ENCODE measurements at regions of chr2 and their contacts with region 1.

Region 1: GRCh38 chr2:219245148-219245898 is at the starts of genes GLB1L and STK16:
- DNase-seq: peak; percentile 89
- ATAC-seq: peak; percentile 81
- H3K4me3 ChIP-seq: peak within 1 kb of the TSS; percentile 88 to 97 (median 93)
- H3K27ac ChIP-seq: peak within 1 kb of the TSS; percentile 72
- H3K4me1 ChIP-seq: peaks cover 53% of the 10 kb centered on the region
- H3K27me3 ChIP-seq: no peaks in the 10 kb centered on the region; a peak in 1 of 5 replicates
- CTCF ChIP-seq: no peak; the same call in 1 of the 2 replicates
- EP300 ChIP-seq: no peak
- POLR2A ChIP-seq: peak in 1 of 2 experiments; percentile 91; a peak in 2 of 4 replicates
- RAD21 ChIP-seq: peak; percentile 44
- total RNA-seq, gene GLB1L: 2.7 and 6.8 TPM in 2 replicates
- total RNA-seq, gene STK16: 27.0 and 28.0 TPM in 2 replicates

Region 2: GRCh38 chr2:219095406-219095935 is 149.9 kb before region 1 on chr2:
- CTCF ChIA-PET with region 1: no interaction called
- POLR2A ChIA-PET with region 1: no interaction called
- in situ Hi-C with region 1: no loop called
- intact Hi-C with region 1: no loop called
- DNase-seq: no peak
- ATAC-seq: no peak
- H3K4me3 ChIP-seq: no peak overlapping the region
- H3K27ac ChIP-seq: no peak overlapping the region
- H3K4me1 ChIP-seq: peaks cover 12% of the 10 kb centered on the region
- H3K27me3 ChIP-seq: no peaks in the 10 kb centered on the region; a peak in 1 of 5 replicates
- CTCF ChIP-seq: no peak
- EP300 ChIP-seq: no peak
- POLR2A ChIP-seq: no peak
- RAD21 ChIP-seq: no peak

Region 3: GRCh38 chr2:219206442-219207253 is 38.7 kb before region 1 on chr2 and contains the start of gene ZFAND2B:
- CTCF ChIA-PET with region 1: no interaction called
- POLR2A ChIA-PET with region 1: interaction called, 73 read pairs
- in situ Hi-C with region 1: no loop called
- intact Hi-C with region 1: no loop called
- DNase-seq: peak; percentile 86
- ATAC-seq: peak; percentile 83
- H3K4me3 ChIP-seq: peak within 1 kb of the TSS; percentile 65 to 86 (median 74)
- H3K27ac ChIP-seq: peak within 1 kb of the TSS; percentile 95
- H3K4me1 ChIP-seq: peaks cover 54% of the 10 kb centered on the region
- H3K27me3 ChIP-seq: no peaks in the 10 kb centered on the region; a peak in 1 of 5 replicates
- CTCF ChIP-seq: no peak; the same call in 1 of the 2 replicates
- EP300 ChIP-seq: peak in 1 of 2 experiments; percentile 4; a peak in 1 of 4 replicates
- POLR2A ChIP-seq: peak in 1 of 2 experiments; percentile 97; a peak in 2 of 4 replicates
- RAD21 ChIP-seq: no peak; the same call in none of the 2 replicates
- total RNA-seq, gene ZFAND2B: 39.4 and 53.3 TPM in 2 replicates

Region 4: GRCh38 chr2:219229305-219230058 is 15.8 kb before region 1 on chr2 and contains the starts of genes ANKZF1 and ATG9A:
- CTCF ChIA-PET with region 1: no interaction called
- POLR2A ChIA-PET with region 1: interaction called, 69 read pairs
- in situ Hi-C with region 1: no loop called
- intact Hi-C with region 1: loop called (anchors 1 kb)
- DNase-seq: peak; percentile 99
- ATAC-seq: peak; percentile 94
- H3K4me3 ChIP-seq: peak within 1 kb of the TSS; percentile 91 to 93 (median 93)
- H3K27ac ChIP-seq: peak within 1 kb of the TSS; percentile 81
- H3K4me1 ChIP-seq: peaks cover 39% of the 10 kb centered on the region
- H3K27me3 ChIP-seq: no peaks in the 10 kb centered on the region; a peak in 1 of 5 replicates
- CTCF ChIP-seq: peak; percentile 9; the same call in 1 of the 2 replicates
- EP300 ChIP-seq: peak; percentile 20 to 21; a peak in 3 of 4 replicates
- POLR2A ChIP-seq: peak; percentile 85 to 92
- RAD21 ChIP-seq: peak; percentile 73
- total RNA-seq, gene ANKZF1: 14.6 and 25.3 TPM in 2 replicates
- total RNA-seq, gene ATG9A: 22.2 and 35.0 TPM in 2 replicates

Region 5: DNA sequence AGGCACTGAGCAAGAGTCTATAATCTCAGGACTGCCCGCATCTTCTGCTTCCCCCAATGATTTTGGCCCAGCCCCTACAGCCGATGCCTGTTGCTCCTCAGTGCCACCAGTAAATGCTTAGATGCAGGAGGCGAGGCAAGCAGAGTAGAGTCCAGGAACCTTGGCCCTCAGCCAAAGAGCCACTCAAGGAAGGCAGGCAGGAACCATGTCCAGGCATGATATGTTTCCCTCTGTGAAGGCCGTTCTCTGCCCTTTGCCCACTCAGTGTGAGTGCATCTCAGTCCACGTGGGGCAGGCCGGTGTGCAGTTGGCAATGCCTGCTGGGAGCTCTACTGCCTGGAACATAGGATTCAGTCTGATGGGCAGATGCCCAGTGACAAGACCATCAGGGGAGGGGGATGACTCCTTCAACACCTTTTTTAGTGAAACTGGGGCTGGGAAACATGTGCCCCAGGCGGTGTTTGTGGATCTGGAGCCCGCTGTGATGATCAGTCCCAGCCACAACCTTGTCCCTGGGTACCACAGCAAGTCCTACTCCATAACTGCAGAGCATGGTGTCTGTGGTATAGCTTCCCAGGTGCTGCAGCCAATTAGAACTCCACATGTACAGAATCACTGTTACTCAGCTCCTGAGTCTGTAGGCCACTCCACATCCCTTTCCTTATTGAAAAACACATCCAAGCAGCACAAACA is 24.2 kb after region 1 on chr2:
- CTCF ChIA-PET with region 1: no interaction called
- POLR2A ChIA-PET with region 1: interaction called, 22 read pairs
- in situ Hi-C with region 1: no loop called
- intact Hi-C with region 1: no loop called
- DNase-seq: peak; percentile 54
- ATAC-seq: peak; percentile 76
- H3K4me3 ChIP-seq: 0 out of 6 replicates have a peak overlapping the region, but pooled peaks of 1 of the 3 experiments have one; percentile 29
- H3K27ac ChIP-seq: peak overlapping the region; percentile 3
- H3K4me1 ChIP-seq: peaks cover 37% of the 10 kb centered on the region
- H3K27me3 ChIP-seq: peaks cover 2 to 24% of the 10 kb centered on the region in 2 experiments; a peak in 3 of 5 replicates
- CTCF ChIP-seq: no peak
- EP300 ChIP-seq: 0 out of 4 replicates have a peak, but pooled peaks of 1 of the 2 experiments have one; percentile 14
- POLR2A ChIP-seq: no peak
- RAD21 ChIP-seq: no peak

Region 6: DNA sequence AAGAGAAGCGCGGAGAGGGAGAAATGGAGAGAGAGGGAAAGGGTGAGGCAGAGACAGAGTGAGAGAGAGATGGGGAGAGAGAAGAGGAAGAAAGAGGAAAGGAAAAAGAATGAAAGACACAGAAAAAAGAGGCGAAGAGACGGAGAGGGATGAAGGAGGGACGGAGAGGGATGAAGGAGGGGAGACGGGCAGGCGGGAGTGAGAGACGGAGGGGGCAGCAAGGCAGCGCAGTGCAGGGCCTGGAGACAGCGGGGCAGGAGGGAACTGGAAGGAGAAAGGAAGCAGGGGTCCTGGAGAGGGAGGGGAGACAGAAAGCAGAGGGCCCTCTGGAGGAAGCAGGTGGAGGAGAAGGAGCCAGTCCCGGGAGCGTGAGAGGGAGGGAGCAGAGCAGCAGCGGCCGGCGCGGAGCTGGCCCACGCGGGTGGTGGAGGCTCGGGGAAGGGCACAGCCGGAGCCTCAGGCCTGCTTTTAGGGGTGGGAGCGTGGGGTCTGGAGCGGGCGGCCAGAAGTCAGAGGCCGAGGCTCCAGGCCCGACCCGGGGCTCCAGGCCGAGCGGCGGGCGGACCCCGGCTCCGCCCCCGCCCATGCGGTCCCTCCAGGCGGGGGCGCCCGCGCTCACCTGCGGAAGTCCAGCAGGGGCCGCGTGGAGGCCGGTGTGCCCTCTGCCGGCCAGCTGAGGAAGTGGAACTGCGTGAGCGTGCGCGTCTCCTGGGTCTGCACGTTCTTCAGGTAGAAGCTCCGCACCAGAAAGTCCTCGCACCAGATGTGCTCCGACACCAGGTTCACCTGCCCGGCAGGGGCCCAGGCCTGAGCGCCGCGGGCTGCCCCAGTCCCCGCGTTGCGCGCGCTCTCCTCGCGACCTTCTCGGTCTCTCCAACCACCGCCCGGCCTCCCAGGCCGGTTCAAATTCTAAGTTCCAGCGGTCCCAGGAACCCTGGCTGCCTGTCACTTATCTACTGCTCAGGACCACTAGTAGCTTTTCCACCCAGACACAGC is 49.3 kb after region 1 on chr2:
- CTCF ChIA-PET with region 1: interaction called, 5 read pairs
- POLR2A ChIA-PET with region 1: interaction called, 25 read pairs
- in situ Hi-C with region 1: no loop called
- intact Hi-C with region 1: loop called (anchors 2 kb)
- DNase-seq: peak; percentile 80
- ATAC-seq: peak; percentile 85
- H3K4me3 ChIP-seq: peak overlapping the region; percentile 60 to 81 (median 80)
- H3K27ac ChIP-seq: no peak overlapping the region
- H3K4me1 ChIP-seq: peaks cover 36% of the 10 kb centered on the region
- H3K27me3 ChIP-seq: peaks cover 6 to 83% of the 10 kb centered on the region in 2 experiments; a peak in 4 of 5 replicates
- CTCF ChIP-seq: peak; percentile 93
- EP300 ChIP-seq: peak; percentile 48 to 53; a peak in 1 of 4 replicates
- POLR2A ChIP-seq: peak; percentile 48 to 70; a peak in 3 of 4 replicates
- RAD21 ChIP-seq: peak; percentile 99

Measured in HepG2 (cell line).